ENCODE measurements at regions of chr3 and their contacts with region 1.

Region 1: DNA sequence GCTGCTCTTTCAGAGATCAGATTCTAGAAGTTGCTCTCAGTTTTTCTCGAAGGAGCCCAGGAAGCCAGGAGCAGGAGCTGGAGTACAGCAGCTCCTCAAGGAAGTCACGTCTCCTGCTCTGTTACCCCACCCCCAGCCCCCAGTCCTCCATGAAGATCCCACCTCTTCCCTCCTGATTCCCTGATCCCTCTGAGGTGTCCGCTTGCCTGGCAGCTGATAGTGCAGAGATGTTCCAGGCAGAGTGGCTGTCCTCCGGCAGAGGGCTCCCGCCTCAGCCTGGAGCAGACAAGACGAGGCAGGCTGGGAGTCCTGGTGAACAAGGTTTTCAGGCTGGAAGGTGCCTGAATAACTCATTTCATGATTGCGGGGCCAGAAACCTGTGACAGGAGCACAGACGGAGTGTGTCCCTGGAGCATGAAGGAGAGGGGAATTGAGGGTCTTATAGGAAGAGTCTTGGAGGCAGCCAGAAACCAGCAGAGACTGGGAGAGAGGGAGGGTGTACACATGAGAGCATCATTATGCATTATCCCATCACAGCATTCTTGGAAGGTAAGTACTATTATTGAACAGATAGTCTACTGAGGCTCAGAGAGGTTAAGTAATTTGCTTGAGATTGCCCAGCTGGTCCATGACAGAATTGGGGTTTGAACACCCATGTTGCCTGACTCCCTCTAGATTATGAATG is 1.2 kb downstream of the HRH1 start:
- DNase-seq: peak; percentile 62 to 74
- H3K4me3 ChIP-seq: peak overlapping the region; percentile 68
- H3K27ac ChIP-seq: no peak overlapping the region
- H3K4me1 ChIP-seq: peaks cover 12% of the 10 kb centered on the region; the same call in 1 of the 2 replicates
- H3K27me3 ChIP-seq: no peaks in the 10 kb centered on the region
- CTCF ChIP-seq: peak; percentile 76

Region 2: DNA sequence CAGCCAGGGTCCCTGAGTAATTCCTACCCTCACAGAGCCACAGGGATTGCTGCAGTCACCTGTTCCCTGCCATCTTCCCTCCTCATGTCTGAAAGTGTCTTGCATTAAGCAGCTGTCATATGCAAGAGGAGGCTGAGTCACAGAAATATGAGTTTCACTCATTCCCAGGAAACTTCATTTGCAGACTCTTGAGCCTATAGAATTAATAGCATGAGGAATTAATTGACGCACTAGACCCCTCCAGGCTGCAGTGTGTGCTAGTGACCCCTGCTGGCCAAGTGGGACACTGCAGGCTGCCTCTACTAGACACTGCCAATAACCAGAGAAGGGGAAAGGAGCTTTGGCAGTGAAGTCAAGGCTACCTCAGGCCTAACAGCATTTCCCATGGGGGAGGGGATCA is 213.5 kb before region 1 on chr3:
- CTCF ChIA-PET with region 1: no interaction called
- POLR2A ChIA-PET with region 1: no interaction called
- intact Hi-C with region 1: no loop called
- DNase-seq: no peak
- H3K4me3 ChIP-seq: no peak overlapping the region
- H3K27ac ChIP-seq: no peak overlapping the region
- H3K4me1 ChIP-seq: no peaks in the 10 kb centered on the region
- H3K27me3 ChIP-seq: peaks cover 75% of the 10 kb centered on the region
- CTCF ChIP-seq: peak; percentile 81

Region 3: GRCh38 chr3:11201246-11202024 is 46.0 kb after region 1 on chr3:
- CTCF ChIA-PET with region 1: no interaction called
- POLR2A ChIA-PET with region 1: interaction called, 3 read pairs
- intact Hi-C with region 1: loop called (anchors 5 kb)
- DNase-seq: peak in 1 of 2 experiments; percentile 71
- H3K4me3 ChIP-seq: no peak overlapping the region
- H3K27ac ChIP-seq: no peak overlapping the region
- H3K4me1 ChIP-seq: peaks cover 12% of the 10 kb centered on the region
- H3K27me3 ChIP-seq: no peaks in the 10 kb centered on the region
- CTCF ChIP-seq: no peak

Region 4: GRCh38 chr3:11211531-11212298 is 56.2 kb after region 1 on chr3:
- CTCF ChIA-PET with region 1: no interaction called
- POLR2A ChIA-PET with region 1: no interaction called
- intact Hi-C with region 1: loop called (anchors 2 kb)
- DNase-seq: no peak
- H3K4me3 ChIP-seq: no peak overlapping the region
- H3K27ac ChIP-seq: peak overlapping the region; percentile 41; the same call in 1 of the 2 replicates
- H3K4me1 ChIP-seq: peaks cover 35% of the 10 kb centered on the region
- H3K27me3 ChIP-seq: no peaks in the 10 kb centered on the region
- CTCF ChIP-seq: no peak